Aorta (tissue), 5 donors: ENCODE measurements at regions of chr10 and their contacts with region 1.

Region 1: DNA sequence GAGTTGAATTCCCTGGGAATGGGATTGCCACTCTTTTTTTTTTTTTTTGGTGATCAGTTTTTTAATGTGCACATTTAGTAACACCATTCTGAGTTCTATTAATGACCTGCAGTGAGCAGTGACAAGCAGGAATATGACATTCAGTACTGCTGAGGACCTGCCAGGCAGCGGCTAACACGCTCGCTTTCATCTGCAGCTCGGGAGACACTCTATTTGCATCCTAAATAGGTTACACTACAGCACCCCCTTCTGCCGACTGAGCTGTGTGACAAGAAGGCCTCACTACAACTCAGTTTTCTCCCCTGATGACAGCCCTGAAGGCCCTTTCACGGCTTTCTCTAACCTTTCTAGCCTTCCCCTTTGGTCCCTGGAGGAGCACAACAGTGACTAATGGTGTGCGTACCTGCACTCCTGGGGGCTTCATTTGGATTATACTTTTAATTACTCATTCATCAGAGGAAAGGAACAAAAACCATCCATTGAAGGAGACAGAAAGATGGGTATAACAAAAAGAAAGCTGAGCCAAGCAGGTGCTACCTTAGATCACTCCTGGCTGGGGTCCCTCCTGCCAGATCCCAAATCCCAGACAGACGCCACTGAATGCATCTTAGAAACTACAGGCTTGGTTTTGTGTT is 872.4 kb downstream of the LRMDA start:
- DNase-seq: peak; percentile 79 to 83
- ATAC-seq: peak; percentile 81
- H3K4me3 ChIP-seq: peak overlapping the region in 1 of 2 donors; percentile 12
- H3K27ac ChIP-seq: no peak overlapping the region
- H3K4me1 ChIP-seq: peaks cover 0 to 5% of the 10 kb centered on the region in 2 donors
- H3K27me3 ChIP-seq: no peaks in the 10 kb centered on the region

Region 2: DNA sequence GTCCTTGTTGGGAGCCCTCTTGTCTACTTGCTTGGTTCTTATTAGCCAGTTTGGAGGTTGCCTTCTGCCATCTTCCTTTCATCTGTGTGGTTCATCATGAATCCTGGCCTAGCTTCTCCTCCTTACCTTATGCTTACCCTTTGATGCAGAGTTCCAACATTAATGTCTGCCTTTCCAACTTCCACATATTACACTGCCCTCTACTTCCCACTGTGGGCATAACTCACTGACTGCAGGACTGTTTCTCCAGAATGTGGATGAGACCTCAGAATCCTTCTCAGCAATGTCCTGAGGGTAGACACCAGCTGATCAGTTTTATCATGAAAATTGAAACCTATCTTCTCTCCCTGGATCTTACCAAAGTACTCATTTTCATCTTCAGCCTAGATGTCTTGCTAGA is 381.4 kb before region 1 on chr10:
- intact Hi-C with region 1: loop called in 1 of 2 experiments (anchors 10 kb)
- DNase-seq: no peak
- ATAC-seq: no peak
- H3K4me3 ChIP-seq: no peak overlapping the region
- H3K27ac ChIP-seq: no peak overlapping the region
- H3K4me1 ChIP-seq: no peaks in the 10 kb centered on the region
- H3K27me3 ChIP-seq: no peaks in the 10 kb centered on the region

Region 3: DNA sequence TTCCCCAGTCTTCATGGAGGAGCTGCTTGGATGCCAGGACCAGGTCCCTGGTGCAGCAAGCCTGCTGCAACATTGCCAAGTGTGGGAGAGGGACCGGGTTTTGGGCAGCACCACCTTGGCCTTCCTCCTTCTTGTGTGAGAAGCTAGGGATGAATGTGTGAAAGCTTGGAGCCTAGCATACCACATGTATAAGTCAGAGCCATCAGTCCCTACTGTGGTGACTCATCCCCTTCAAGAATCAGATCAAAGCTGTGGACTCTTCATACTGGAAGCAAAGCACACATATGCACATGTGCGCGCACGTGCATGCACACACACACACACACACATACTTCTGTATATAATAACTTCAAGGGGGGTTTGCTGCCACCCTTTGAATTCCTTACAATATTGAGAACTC is 344.6 kb before region 1 on chr10:
- intact Hi-C with region 1: no loop called
- DNase-seq: no peak
- ATAC-seq: no peak
- H3K4me3 ChIP-seq: no peak overlapping the region
- H3K27ac ChIP-seq: no peak overlapping the region
- H3K4me1 ChIP-seq: no peaks in the 10 kb centered on the region
- H3K27me3 ChIP-seq: no peaks in the 10 kb centered on the region

Region 4: GRCh38 chr10:76036111-76036940 is 267.5 kb before region 1 on chr10:
- intact Hi-C with region 1: loop called in 1 of 2 experiments (anchors 5 kb)
- DNase-seq: peak; percentile 83 to 91
- ATAC-seq: peak; percentile 90
- H3K4me3 ChIP-seq: peak overlapping the region in 1 of 2 donors; percentile 48
- H3K27ac ChIP-seq: no peak overlapping the region
- H3K4me1 ChIP-seq: no peaks in the 10 kb centered on the region
- H3K27me3 ChIP-seq: no peaks in the 10 kb centered on the region

Region 5: DNA sequence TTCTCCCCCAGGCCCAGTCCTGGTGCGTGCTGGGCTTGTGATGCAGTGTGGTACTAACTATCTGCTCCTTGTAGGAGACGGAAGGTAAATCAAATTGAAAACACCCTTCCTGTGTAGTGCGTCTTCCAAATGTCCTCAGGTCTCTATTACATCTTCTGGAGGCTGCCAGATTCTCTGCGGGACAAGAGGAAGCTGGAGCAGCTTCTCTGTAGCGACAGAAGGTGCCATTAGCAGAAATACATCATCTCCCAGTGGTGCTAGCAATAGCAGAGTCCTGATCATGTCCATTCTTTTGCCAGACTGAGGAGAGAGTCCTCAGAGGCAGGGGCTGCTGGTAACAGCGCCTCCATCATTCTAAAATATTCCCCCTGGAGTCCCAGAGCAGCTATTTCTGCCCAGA is 197.2 kb before region 1 on chr10:
- intact Hi-C with region 1: loop called in 1 of 2 experiments (anchors 10 kb)
- DNase-seq: no peak
- ATAC-seq: no peak
- H3K4me3 ChIP-seq: no peak overlapping the region
- H3K27ac ChIP-seq: no peak overlapping the region
- H3K4me1 ChIP-seq: peaks cover 0 to 1% of the 10 kb centered on the region in 2 donors
- H3K27me3 ChIP-seq: no peaks in the 10 kb centered on the region

Region 6: GRCh38 chr10:76244061-76244686 is 59.6 kb before region 1 on chr10:
- intact Hi-C with region 1: no loop called
- DNase-seq: no peak
- ATAC-seq: no peak
- H3K4me3 ChIP-seq: no peak overlapping the region
- H3K27ac ChIP-seq: no peak overlapping the region
- H3K4me1 ChIP-seq: no peaks in the 10 kb centered on the region
- H3K27me3 ChIP-seq: no peaks in the 10 kb centered on the region

Region 7: GRCh38 chr10:76353237-76353851 is 49.5 kb after region 1 on chr10:
- intact Hi-C with region 1: no loop called
- DNase-seq: no peak
- ATAC-seq: no peak
- H3K4me3 ChIP-seq: no peak overlapping the region
- H3K27ac ChIP-seq: no peak overlapping the region
- H3K4me1 ChIP-seq: peaks cover 0 to 2% of the 10 kb centered on the region in 2 donors
- H3K27me3 ChIP-seq: no peaks in the 10 kb centered on the region